ENCODE measurements at regions of chr10 and their contacts with region 1.

Region 1: GRCh38 chr10:17923728-17924127 is 28.0 kb upstream of the SLC39A12 start:
- DNase-seq: no peak
- ATAC-seq: peak in 1 of 2 donors; percentile 83

Region 2: GRCh38 chr10:17637869-17638268 is 285.9 kb before region 1 on chr10:
- intact Hi-C with region 1: no loop called
- DNase-seq: no peak
- ATAC-seq: no peak

Region 3: DNA sequence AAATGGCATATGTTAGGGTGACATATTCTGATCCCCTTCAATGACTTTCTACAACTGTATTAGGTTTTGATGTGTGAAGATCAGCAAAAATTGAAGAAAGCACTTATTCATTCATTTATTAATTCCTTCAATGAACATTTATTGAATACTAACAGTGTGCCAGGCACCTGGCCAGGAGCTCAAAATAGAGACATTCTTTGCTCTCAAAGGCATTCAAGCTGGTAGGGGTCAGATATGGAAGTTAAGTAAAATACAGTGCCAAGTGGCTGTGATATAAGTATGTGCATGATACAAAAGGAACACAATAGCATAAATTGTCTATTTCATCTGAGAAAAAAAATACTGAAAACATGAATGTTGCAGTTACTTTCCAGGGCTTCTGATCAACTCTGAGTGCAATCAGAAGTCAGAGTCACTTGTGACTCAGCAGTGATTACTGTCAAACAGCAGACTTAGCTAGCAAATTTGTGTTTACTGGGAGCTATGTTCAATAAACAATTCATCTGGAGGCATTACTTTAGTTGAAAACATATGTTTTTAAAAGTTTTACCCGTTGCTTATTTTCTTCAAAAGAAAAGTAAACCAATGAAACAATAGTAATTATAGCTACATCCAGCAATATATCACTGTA is 156.1 kb after region 1 on chr10:
- intact Hi-C with region 1: loop called in 1 of 2 experiments (anchors 10 kb)
- DNase-seq: no peak
- ATAC-seq: no peak

Measured in left cardiac atrium (tissue), 4 donors.